ENCODE measurements at regions of chr13 and their contacts with region 1.

Region 1: GRCh38 chr13:39016787-39017186 is 21.1 kb downstream of the PROSER1 start:
- DNase-seq: no peak
- H3K4me3 ChIP-seq: no peak overlapping the region
- H3K27ac ChIP-seq: no peak overlapping the region
- H3K4me1 ChIP-seq: no peaks in the 10 kb centered on the region; a peak in 1 of 7 replicates
- H3K27me3 ChIP-seq: no peaks in the 10 kb centered on the region
- CTCF ChIP-seq: peak; percentile 17 to 71 (median 56)
- EP300 ChIP-seq: no peak
- POLR2A ChIP-seq: no peak
- RAD21 ChIP-seq: peak; percentile 61 to 68

Region 2: GRCh38 chr13:38670627-38671026 is 346.2 kb before region 1 on chr13:
- CTCF ChIA-PET with region 1: no interaction called
- POLR2A ChIA-PET with region 1: no interaction called
- DNase-seq: no peak
- H3K4me3 ChIP-seq: no peak overlapping the region
- H3K27ac ChIP-seq: no peak overlapping the region
- H3K4me1 ChIP-seq: peaks cover 0 to 2% (median 0%) of the 10 kb centered on the region in 4 experiments; a peak in 1 of 7 replicates
- H3K27me3 ChIP-seq: no peaks in the 10 kb centered on the region
- CTCF ChIP-seq: no peak
- EP300 ChIP-seq: no peak
- POLR2A ChIP-seq: no peak
- RAD21 ChIP-seq: peak; percentile 25 to 41; a peak in 3 of 4 replicates

Region 3: GRCh38 chr13:39032150-39032549 is 15.4 kb after region 1 on chr13:
- CTCF ChIA-PET with region 1: interaction called, 15 read pairs
- POLR2A ChIA-PET with region 1: interaction called, 73 read pairs
- DNase-seq: no peak
- H3K4me3 ChIP-seq: no peak overlapping the region
- H3K27ac ChIP-seq: no peak overlapping the region
- H3K4me1 ChIP-seq: peaks cover 0 to 8% (median 0%) of the 10 kb centered on the region in 4 experiments; a peak in 3 of 7 replicates
- H3K27me3 ChIP-seq: no peaks in the 10 kb centered on the region
- CTCF ChIP-seq: no peak
- EP300 ChIP-seq: no peak
- POLR2A ChIP-seq: no peak
- RAD21 ChIP-seq: no peak

Region 4: GRCh38 chr13:39054112-39054511 is 37.3 kb after region 1 on chr13:
- CTCF ChIA-PET with region 1: no interaction called
- POLR2A ChIA-PET with region 1: no interaction called
- DNase-seq: no peak
- H3K4me3 ChIP-seq: no peak overlapping the region
- H3K27ac ChIP-seq: no peak overlapping the region
- H3K4me1 ChIP-seq: no peaks in the 10 kb centered on the region
- H3K27me3 ChIP-seq: peaks cover 0 to 1% (median 0%) of the 10 kb centered on the region in 4 experiments; a peak in 1 of 7 replicates
- CTCF ChIP-seq: no peak
- EP300 ChIP-seq: no peak
- POLR2A ChIP-seq: no peak
- RAD21 ChIP-seq: no peak

Region 5: GRCh38 chr13:39119422-39119821 is 102.6 kb after region 1 on chr13:
- CTCF ChIA-PET with region 1: no interaction called
- POLR2A ChIA-PET with region 1: no interaction called
- DNase-seq: no peak
- H3K4me3 ChIP-seq: no peak overlapping the region
- H3K27ac ChIP-seq: no peak overlapping the region
- H3K4me1 ChIP-seq: no peaks in the 10 kb centered on the region
- H3K27me3 ChIP-seq: no peaks in the 10 kb centered on the region
- CTCF ChIP-seq: no peak
- EP300 ChIP-seq: no peak
- POLR2A ChIP-seq: no peak
- RAD21 ChIP-seq: no peak

Measured in H1 (cell line).